Naive thymus-derived CD4-positive, alpha-beta T cell (primary cell): ENCODE measurements at regions of chr2 and their contacts with region 1.

Region 1: GRCh38 chr2:18520451-18521425 is 39.7 kb downstream of the RDH14 start:
- DNase-seq: peak; percentile 39 to 72 (median 65)
- ATAC-seq: peak; percentile 78
- H3K4me3 ChIP-seq: no peak overlapping the region
- H3K4me3 Mint-ChIP-seq: no peak overlapping the region
- H3K27ac ChIP-seq: no peak overlapping the region
- H3K27ac Mint-ChIP-seq: no peak overlapping the region
- H3K4me1 ChIP-seq: no peaks in the 10 kb centered on the region
- H3K4me1 Mint-ChIP-seq: no peaks in the 10 kb centered on the region
- H3K27me3 ChIP-seq: no peaks in the 10 kb centered on the region
- H3K27me3 Mint-ChIP-seq: peaks cover 9 to 19% (median 17%) of the 10 kb centered on the region in 5 donors

Region 2: DNA sequence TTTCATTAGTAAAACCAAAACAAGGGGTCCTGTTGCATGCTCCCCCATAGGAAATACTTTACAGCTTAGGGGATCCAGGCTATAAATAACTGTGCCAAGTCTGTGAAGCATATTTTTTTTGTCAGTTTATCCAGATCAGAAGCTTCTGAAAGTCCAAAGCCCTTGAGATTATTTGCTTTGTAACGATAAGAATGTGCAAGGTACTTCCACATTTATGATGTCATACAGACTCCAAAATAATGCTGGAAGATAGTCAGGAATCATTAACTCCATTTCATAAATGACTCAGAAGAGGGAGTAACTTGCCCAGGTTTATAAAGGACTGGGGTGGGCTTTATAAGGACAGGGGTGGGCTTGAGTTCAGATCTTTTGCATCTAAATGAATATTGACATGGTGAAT is 10.5 kb after region 1 on chr2:
- CTCF ChIA-PET with region 1: interaction called, 12 read pairs
- POLR2A ChIA-PET with region 1: no interaction called
- intact Hi-C with region 1: no loop called
- DNase-seq: no peak
- ATAC-seq: no peak
- H3K4me3 ChIP-seq: no peak overlapping the region
- H3K4me3 Mint-ChIP-seq: no peak overlapping the region
- H3K27ac ChIP-seq: no peak overlapping the region
- H3K27ac Mint-ChIP-seq: no peak overlapping the region
- H3K4me1 ChIP-seq: no peaks in the 10 kb centered on the region
- H3K4me1 Mint-ChIP-seq: peaks cover 0 to 2% (median 0%) of the 10 kb centered on the region in 7 donors
- H3K27me3 ChIP-seq: no peaks in the 10 kb centered on the region
- H3K27me3 Mint-ChIP-seq: peaks cover 0 to 10% (median 5%) of the 10 kb centered on the region in 5 donors

Region 3: GRCh38 chr2:18708203-18708715 is 187.5 kb after region 1 on chr2:
- CTCF ChIA-PET with region 1: no interaction called
- POLR2A ChIA-PET with region 1: no interaction called
- intact Hi-C with region 1: no loop called
- DNase-seq: no peak
- ATAC-seq: no peak
- H3K4me3 ChIP-seq: no peak overlapping the region
- H3K4me3 Mint-ChIP-seq: no peak overlapping the region
- H3K27ac ChIP-seq: no peak overlapping the region
- H3K27ac Mint-ChIP-seq: no peak overlapping the region
- H3K4me1 ChIP-seq: no peaks in the 10 kb centered on the region
- H3K4me1 Mint-ChIP-seq: peaks cover 0 to 7% (median 3%) of the 10 kb centered on the region in 7 donors
- H3K27me3 ChIP-seq: no peaks in the 10 kb centered on the region
- H3K27me3 Mint-ChIP-seq: no peaks in the 10 kb centered on the region

Region 4: GRCh38 chr2:18749912-18750526 is 229.3 kb after region 1 on chr2:
- CTCF ChIA-PET with region 1: no interaction called
- POLR2A ChIA-PET with region 1: no interaction called
- intact Hi-C with region 1: loop called (anchors 1 to 2 kb)
- DNase-seq: peak in 6 of 9 donors; percentile 19 to 36 (median 22)
- ATAC-seq: no peak
- H3K4me3 ChIP-seq: no peak overlapping the region
- H3K4me3 Mint-ChIP-seq: no peak overlapping the region
- H3K27ac ChIP-seq: no peak overlapping the region
- H3K27ac Mint-ChIP-seq: no peak overlapping the region
- H3K4me1 ChIP-seq: no peaks in the 10 kb centered on the region
- H3K4me1 Mint-ChIP-seq: no peaks in the 10 kb centered on the region
- H3K27me3 ChIP-seq: no peaks in the 10 kb centered on the region
- H3K27me3 Mint-ChIP-seq: no peaks in the 10 kb centered on the region

Region 5: GRCh38 chr2:19321946-19322345 is 801.2 kb after region 1 on chr2:
- CTCF ChIA-PET with region 1: no interaction called
- POLR2A ChIA-PET with region 1: no interaction called
- intact Hi-C with region 1: loop called in 1 of 2 experiments (anchors 10 kb)
- DNase-seq: no peak
- ATAC-seq: no peak
- H3K4me3 ChIP-seq: no peak overlapping the region
- H3K4me3 Mint-ChIP-seq: no peak overlapping the region
- H3K27ac ChIP-seq: no peak overlapping the region
- H3K27ac Mint-ChIP-seq: no peak overlapping the region
- H3K4me1 ChIP-seq: no peaks in the 10 kb centered on the region
- H3K4me1 Mint-ChIP-seq: no peaks in the 10 kb centered on the region
- H3K27me3 ChIP-seq: no peaks in the 10 kb centered on the region
- H3K27me3 Mint-ChIP-seq: peaks cover 0 to 10% (median 0%) of the 10 kb centered on the region in 5 donors

Region 6: GRCh38 chr2:19505199-19506136 is 984.7 kb after region 1 on chr2:
- CTCF ChIA-PET with region 1: no interaction called
- POLR2A ChIA-PET with region 1: no interaction called
- intact Hi-C with region 1: loop called in 1 of 2 experiments (anchors 2 kb)
- DNase-seq: no peak
- ATAC-seq: no peak
- H3K4me3 ChIP-seq: no peak overlapping the region
- H3K4me3 Mint-ChIP-seq: no peak overlapping the region
- H3K27ac ChIP-seq: no peak overlapping the region
- H3K27ac Mint-ChIP-seq: no peak overlapping the region
- H3K4me1 ChIP-seq: no peaks in the 10 kb centered on the region
- H3K4me1 Mint-ChIP-seq: no peaks in the 10 kb centered on the region
- H3K27me3 ChIP-seq: no peaks in the 10 kb centered on the region
- H3K27me3 Mint-ChIP-seq: peaks cover 16 to 54% (median 35%) of the 10 kb centered on the region in 5 donors

Region 7: DNA sequence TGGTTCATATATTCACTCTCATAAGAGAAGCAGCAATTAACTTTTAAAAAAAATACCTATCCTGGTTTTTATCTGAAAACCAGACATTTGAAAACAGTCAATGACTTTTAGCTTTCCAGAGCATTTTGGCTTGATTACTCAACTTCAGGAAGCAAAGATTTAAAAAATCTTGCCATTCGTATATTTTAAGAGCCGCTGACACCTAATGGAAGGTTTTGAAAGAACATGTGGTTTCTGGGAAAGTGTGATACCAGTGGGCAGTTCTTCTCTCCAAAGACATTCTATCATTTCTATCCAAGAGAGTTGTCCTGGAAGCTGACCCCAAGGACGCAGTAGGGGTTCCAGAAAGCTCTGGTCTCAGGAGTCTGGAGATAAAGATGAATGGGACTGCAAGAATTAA is 1146.3 kb after region 1 on chr2:
- CTCF ChIA-PET with region 1: no interaction called
- POLR2A ChIA-PET with region 1: no interaction called
- intact Hi-C with region 1: loop called in 1 of 2 experiments (anchors 1 kb)
- DNase-seq: no peak
- ATAC-seq: no peak
- H3K4me3 ChIP-seq: no peak overlapping the region
- H3K4me3 Mint-ChIP-seq: no peak overlapping the region
- H3K27ac ChIP-seq: no peak overlapping the region
- H3K27ac Mint-ChIP-seq: no peak overlapping the region
- H3K4me1 ChIP-seq: no peaks in the 10 kb centered on the region
- H3K4me1 Mint-ChIP-seq: no peaks in the 10 kb centered on the region
- H3K27me3 ChIP-seq: no peaks in the 10 kb centered on the region
- H3K27me3 Mint-ChIP-seq: peaks cover 0 to 32% (median 17%) of the 10 kb centered on the region in 5 donors

Region 8: GRCh38 chr2:19863303-19864041 is 1342.7 kb after region 1 on chr2:
- CTCF ChIA-PET with region 1: interaction called, 27 read pairs
- POLR2A ChIA-PET with region 1: no interaction called
- intact Hi-C with region 1: loop called in 1 of 2 experiments (anchors 1 kb)
- DNase-seq: peak; percentile 28 to 77 (median 66)
- ATAC-seq: peak; percentile 84
- H3K4me3 ChIP-seq: no peak overlapping the region
- H3K4me3 Mint-ChIP-seq: peak overlapping the region in 1 of 10 donors; percentile 34
- H3K27ac ChIP-seq: no peak overlapping the region
- H3K27ac Mint-ChIP-seq: no peak overlapping the region
- H3K4me1 ChIP-seq: peaks cover 10% of the 10 kb centered on the region in 2 donors
- H3K4me1 Mint-ChIP-seq: peaks cover 10 to 17% (median 16%) of the 10 kb centered on the region in 7 donors
- H3K27me3 ChIP-seq: no peaks in the 10 kb centered on the region
- H3K27me3 Mint-ChIP-seq: peaks cover 0 to 13% (median 2%) of the 10 kb centered on the region in 5 donors